ENCODE measurements at regions of chrX and their contacts with region 1.

Region 1: DNA sequence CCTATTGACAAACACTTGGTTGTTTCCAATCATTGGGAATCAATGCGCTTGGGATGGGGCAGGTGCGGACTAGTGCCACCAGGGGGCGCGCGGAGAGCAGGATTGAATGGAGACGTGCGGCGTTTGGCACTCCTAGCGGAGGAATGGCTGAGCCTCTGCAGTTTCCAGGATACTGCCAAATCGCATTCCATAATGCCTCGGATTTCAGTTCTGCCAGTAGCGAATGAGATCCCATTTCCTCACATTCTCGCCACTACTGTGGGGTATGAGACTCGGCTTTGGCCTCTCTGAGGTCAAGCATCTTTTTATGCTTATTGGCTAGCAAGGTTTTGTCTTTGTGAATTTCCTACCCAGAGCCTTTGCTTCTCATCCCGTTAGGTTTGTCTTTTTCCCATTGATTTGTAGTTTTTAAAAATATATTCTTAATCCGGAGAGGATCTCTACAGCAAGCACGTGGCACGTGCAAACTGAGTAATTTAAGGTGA is 28.7 kb downstream of the CLDN34 start:
- DNase-seq: peak; percentile 83
- H3K4me3 ChIP-seq: no peak overlapping the region
- H3K27ac ChIP-seq: no peak overlapping the region
- H3K4me1 ChIP-seq: no peaks in the 10 kb centered on the region
- H3K27me3 ChIP-seq: no peaks in the 10 kb centered on the region
- CTCF ChIP-seq: peak; percentile 95

Region 2: DNA sequence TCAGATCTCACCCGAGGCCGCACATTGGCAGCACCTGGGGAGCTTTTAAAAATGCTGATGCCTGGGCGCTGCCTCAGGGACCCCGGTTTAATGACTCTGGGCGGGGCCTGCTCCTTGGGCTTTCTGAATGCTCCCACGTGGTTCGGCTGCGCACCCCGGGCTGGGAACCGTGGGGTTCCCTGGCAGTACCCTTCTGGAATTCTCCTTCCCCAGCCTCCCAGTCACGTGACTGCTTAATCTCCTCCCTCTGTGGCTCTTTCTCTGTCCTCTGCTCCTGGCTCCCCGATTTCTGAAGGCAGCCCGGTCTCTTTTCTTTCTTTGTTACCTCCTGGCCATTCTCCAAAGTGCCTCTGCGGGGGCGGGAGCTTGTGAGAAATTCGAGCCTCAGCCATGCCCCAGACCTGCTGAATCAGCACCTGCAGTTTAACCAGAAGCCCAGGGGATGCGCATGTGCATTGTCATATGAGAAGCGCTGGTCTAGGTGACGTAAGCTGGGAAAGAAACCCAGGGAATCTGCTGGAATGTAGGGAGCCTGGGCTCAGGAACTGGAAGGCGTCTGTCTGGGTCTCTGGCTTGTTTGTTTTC is 177.5 kb after region 1 on chrX:
- CTCF ChIA-PET with region 1: no interaction called
- POLR2A ChIA-PET with region 1: no interaction called
- intact Hi-C with region 1: loop called (anchors 5 kb)
- DNase-seq: peak; percentile 92
- H3K4me3 ChIP-seq: peak overlapping the region; percentile 11
- H3K27ac ChIP-seq: peak overlapping the region; percentile 40
- H3K4me1 ChIP-seq: peaks cover 5% of the 10 kb centered on the region
- H3K27me3 ChIP-seq: no peaks in the 10 kb centered on the region
- CTCF ChIP-seq: no peak